Tibial artery (tissue), 4 donors: ENCODE measurements at regions of chr19 and their contacts with region 1.

Region 1: GRCh38 chr19:40662921-40663694 is 27.3 kb downstream of the NUMBL start:
- DNase-seq: peak; percentile 90 to 95
- H3K4me3 ChIP-seq: peak overlapping the region; percentile 59 to 62
- H3K27ac ChIP-seq: peak overlapping the region; percentile 71 to 80
- H3K4me1 ChIP-seq: peaks cover 0 to 14% (median 13%) of the 10 kb centered on the region in 4 donors
- H3K27me3 ChIP-seq: no peaks in the 10 kb centered on the region
- CTCF ChIP-seq: peak; percentile 97 to 99

Region 2: GRCh38 chr19:40762754-40763470 is 99.8 kb after region 1 on chr19:
- intact Hi-C with region 1: no loop called
- DNase-seq: no peak
- H3K4me3 ChIP-seq: no peak overlapping the region
- H3K27ac ChIP-seq: no peak overlapping the region
- H3K4me1 ChIP-seq: no peaks in the 10 kb centered on the region
- H3K27me3 ChIP-seq: no peaks in the 10 kb centered on the region
- CTCF ChIP-seq: no peak

Region 3: DNA sequence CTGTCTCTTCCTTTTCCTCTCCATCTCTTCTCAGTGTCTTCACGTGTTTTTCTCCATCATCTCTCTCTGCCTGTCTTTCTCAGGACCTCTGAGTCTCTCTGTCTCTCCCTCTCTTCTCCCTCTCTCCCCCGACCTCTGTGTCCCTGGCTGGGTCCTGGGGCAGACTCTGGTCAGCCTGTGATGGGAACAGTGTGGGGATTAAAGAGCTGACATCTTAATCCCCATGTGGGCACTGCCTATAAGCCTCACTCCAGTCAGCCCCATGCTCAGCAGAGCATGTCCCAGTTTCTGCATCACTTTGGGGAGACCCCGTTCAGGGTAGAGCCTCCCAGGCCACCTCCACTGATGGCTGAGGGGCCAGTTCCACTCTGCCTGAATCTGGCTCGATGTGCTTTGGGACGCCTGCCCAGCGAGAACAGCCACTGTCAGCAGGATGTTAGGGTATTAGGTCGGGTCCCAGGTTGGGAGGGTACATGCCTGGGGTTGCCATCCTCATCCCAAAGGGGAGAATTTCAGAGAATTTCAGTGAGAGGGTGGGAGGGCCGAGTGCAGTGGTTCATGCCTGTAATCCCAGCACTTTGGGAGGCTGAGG is 152.2 kb after region 1 on chr19:
- intact Hi-C with region 1: loop called (anchors 2 kb)
- DNase-seq: peak in 1 of 2 donors; percentile 40
- H3K4me3 ChIP-seq: no peak overlapping the region
- H3K27ac ChIP-seq: no peak overlapping the region
- H3K4me1 ChIP-seq: peaks cover 0 to 42% (median 26%) of the 10 kb centered on the region in 4 donors
- H3K27me3 ChIP-seq: no peaks in the 10 kb centered on the region
- CTCF ChIP-seq: no peak

Region 4: DNA sequence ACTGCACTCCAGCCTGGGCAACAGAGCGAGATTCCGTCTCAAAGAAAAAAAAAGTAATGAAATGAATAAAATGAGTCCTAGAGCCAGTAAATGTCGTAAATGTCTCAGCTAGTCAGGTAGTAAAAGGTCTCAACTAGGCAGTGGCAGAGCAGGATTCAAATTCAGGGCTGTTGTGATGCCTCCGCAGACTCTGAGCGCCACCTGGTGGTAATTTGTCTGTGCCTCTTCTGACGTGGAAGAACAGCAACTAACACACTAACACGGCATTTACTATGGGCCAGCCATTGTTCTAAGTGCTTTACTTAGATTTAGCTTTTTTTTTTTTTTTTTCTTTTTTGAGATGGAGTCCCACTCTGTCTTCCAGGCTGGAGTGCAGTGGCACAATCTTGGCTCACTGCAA is 481.3 kb after region 1 on chr19:
- intact Hi-C with region 1: loop called (anchors 10 kb)
- DNase-seq: peak; percentile 80 to 86
- H3K4me3 ChIP-seq: no peak overlapping the region
- H3K27ac ChIP-seq: no peak overlapping the region
- H3K4me1 ChIP-seq: no peaks in the 10 kb centered on the region
- H3K27me3 ChIP-seq: peaks cover 0 to 14% of the 10 kb centered on the region in 2 donors
- CTCF ChIP-seq: peak; percentile 69 to 76